ENCODE measurements at regions of chr5 and their contacts with region 1.

Region 1: DNA sequence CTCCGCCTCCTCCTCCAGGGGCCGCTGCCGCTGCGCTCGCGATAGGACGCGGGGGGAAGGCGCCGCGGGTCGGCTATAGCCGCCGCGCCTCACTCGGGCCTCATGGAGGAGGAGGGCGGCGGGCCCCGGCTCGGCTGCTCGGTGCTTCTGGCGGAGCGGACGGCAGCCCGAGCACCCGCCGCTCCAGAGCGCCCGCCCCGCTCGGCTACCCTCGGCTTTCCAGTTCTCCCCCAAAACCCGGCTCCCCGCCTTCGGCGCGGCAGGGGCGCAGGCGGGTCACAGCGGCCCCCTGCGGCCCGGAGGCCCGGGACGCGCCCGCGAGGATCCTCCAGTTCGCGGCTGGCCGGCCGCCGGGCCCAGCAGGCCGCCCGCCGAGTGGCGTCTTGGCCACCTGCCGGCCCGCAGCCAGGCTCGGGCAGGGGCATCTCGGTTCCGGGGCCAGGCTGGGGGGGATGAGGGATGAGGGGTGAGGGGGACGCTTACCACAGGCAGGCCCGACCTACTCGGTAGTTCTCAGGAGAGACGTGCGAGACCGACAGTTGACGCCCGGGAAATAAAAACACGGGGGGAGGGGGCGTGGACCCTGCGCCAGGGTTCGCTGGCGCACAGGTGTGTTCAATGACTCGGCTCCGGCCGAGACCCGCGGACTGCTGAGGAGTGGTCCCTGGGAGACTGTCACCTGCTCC is at the start of gene PAIP1:
- H3K4me3 Mint-ChIP-seq: peak within 1 kb of the TSS; percentile 83
- H3K27ac Mint-ChIP-seq: peak within 1 kb of the TSS; percentile 75
- H3K4me1 Mint-ChIP-seq: peaks cover 7% of the 10 kb centered on the region
- H3K27me3 Mint-ChIP-seq: no peaks in the 10 kb centered on the region

Region 2: DNA sequence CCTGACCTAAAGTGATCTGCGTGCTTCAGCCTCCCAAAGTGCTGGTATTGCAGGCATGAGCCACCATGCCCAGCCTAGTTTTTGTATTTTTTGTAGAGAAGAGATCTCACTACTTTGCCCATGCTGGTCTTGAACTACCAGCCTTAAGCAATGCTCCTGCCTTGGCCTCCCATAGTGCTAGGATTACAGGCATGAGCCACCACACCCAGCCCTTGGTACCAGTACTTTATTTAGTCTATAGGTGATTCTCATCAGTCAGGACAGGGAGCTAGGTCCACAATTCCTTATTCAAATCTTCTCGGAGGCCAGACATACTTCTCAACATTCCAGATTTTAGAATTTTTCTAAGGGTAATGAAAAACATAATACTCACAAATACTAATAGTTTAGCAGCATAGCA is 427.8 kb before region 1 on chr5:
- intact Hi-C with region 1: no loop called
- H3K4me3 Mint-ChIP-seq: no peak overlapping the region
- H3K27ac Mint-ChIP-seq: no peak overlapping the region
- H3K4me1 Mint-ChIP-seq: peaks cover 8% of the 10 kb centered on the region
- H3K27me3 Mint-ChIP-seq: no peaks in the 10 kb centered on the region

Region 3: GRCh38 chr5:43514816-43515677 is 42.0 kb before region 1 on chr5 and contains the start of gene C5orf34:
- intact Hi-C with region 1: loop called (anchors 2 kb)
- H3K4me3 Mint-ChIP-seq: peak within 1 kb of the TSS; percentile 79
- H3K27ac Mint-ChIP-seq: peak within 1 kb of the TSS; percentile 88
- H3K4me1 Mint-ChIP-seq: peaks cover 24% of the 10 kb centered on the region
- H3K27me3 Mint-ChIP-seq: no peaks in the 10 kb centered on the region

Measured in dendritic cell treated with granulocyte-macrophage colony-stimulating factor and Interleukin-4, amounts not matched to agents 40 ng/mL and 50 ng/mL, for 4 days (primary cell).